ENCODE measurements at regions of chr6 and their contacts with region 1.

Region 1: GRCh38 chr6:147202516-147203312 is 1.5 kb upstream of the STXBP5 start:
- DNase-seq: peak; percentile 56 to 96 (median 80)
- ATAC-seq: peak; percentile 83
- H3K4me3 ChIP-seq: peak overlapping the region; percentile 76 to 95
- H3K4me3 Mint-ChIP-seq: peak overlapping the region; percentile 95
- H3K27ac ChIP-seq: peak overlapping the region; percentile 86 to 93
- H3K27ac Mint-ChIP-seq: peak overlapping the region; percentile 99
- H3K4me1 ChIP-seq: peaks cover 12% of the 10 kb centered on the region
- H3K4me1 Mint-ChIP-seq: peaks cover 35% of the 10 kb centered on the region
- H3K27me3 ChIP-seq: no peaks in the 10 kb centered on the region
- H3K27me3 Mint-ChIP-seq: no peaks in the 10 kb centered on the region
- CTCF ChIP-seq: no peak

Region 2: DNA sequence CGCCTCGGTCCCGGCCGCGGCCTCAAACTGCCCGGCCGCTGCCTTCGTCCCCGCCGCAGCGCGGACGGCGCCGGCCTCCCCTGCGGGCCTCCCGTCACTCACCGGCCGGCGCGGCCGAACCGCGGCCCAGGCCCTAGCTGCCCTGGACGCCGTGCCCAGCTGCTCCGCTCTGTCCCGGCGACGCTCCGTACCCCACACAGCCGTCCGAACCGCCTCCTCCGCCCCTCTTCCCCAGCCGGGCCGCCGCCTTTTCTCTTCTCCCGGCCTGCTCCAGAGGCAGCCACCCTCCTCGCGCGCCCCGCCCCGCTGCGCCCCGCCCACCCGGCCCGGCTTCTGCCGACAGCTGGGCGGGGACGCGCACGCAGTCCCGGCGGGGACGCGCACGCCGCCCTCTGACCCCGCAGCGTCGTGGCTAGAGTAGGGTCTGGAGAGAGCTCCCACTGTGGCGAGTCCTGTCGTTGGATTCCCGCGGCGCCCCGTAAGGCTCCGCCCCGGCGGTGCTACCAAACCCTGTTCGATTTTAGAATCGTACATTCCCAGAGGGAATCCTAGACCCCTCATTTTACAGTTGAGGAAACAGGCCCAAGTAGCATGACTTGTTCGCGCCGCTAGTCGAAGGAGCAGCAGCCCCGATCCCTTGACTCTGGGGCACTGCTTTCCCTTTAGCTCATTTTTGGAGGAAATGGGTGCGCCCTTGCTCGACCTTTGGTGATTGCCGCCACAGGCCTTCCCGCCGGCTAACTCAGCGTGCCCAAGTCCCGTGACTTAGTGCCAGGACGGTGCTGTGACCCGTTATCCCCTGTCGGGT is 1388.0 kb before region 1 on chr6 and contains the start of gene FBXO30:
- CTCF ChIA-PET with region 1: no interaction called
- POLR2A ChIA-PET with region 1: no interaction called
- intact Hi-C with region 1: loop called (anchors 5 to 10 kb)
- DNase-seq: peak; percentile 73 to 94 (median 84)
- ATAC-seq: peak; percentile 89
- H3K4me3 ChIP-seq: peak within 1 kb of the TSS; percentile 80 to 83
- H3K4me3 Mint-ChIP-seq: peak within 1 kb of the TSS; percentile 96
- H3K27ac ChIP-seq: peak within 1 kb of the TSS; percentile 58 to 89
- H3K27ac Mint-ChIP-seq: peak within 1 kb of the TSS; percentile 96
- H3K4me1 ChIP-seq: peaks cover 32% of the 10 kb centered on the region
- H3K4me1 Mint-ChIP-seq: peaks cover 45% of the 10 kb centered on the region
- H3K27me3 ChIP-seq: no peaks in the 10 kb centered on the region
- H3K27me3 Mint-ChIP-seq: no peaks in the 10 kb centered on the region
- CTCF ChIP-seq: peak; percentile 33
- total RNA-seq, gene FBXO30: 1.5 to 1.7 TPM

Region 3: DNA sequence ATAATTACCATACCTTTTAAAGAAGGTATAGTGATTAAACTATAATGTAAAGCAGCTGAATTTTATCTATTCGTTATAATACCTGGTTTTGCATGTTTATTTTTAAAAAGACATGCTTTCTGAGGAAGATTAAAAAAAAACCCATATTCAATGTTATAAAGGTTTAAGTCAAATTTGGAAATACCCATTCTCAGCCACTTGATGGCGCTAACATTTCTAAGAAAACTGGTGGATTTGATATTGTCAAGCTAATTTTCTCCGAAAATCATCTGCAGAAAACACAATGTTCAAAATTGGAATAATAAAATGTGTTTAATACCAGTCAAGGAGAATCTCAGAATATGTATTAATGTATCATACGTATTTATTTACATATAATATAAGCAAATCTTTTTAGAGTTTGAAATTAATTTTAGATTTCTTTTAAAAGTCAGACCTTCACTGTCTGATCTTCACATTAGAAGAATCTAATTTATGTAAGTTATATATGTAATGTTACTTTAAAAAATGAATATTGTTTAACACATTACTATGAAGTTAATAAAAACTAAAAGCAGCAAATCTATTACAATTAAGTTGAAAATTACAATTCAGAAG is 1273.6 kb before region 1 on chr6:
- CTCF ChIA-PET with region 1: no interaction called
- POLR2A ChIA-PET with region 1: no interaction called
- intact Hi-C with region 1: no loop called
- DNase-seq: peak in 3 of 9 experiments; percentile 5 to 56 (median 37)
- ATAC-seq: no peak
- H3K4me3 ChIP-seq: no peak overlapping the region
- H3K4me3 Mint-ChIP-seq: no peak overlapping the region
- H3K27ac ChIP-seq: no peak overlapping the region
- H3K27ac Mint-ChIP-seq: no peak overlapping the region
- H3K4me1 ChIP-seq: no peaks in the 10 kb centered on the region
- H3K4me1 Mint-ChIP-seq: no peaks in the 10 kb centered on the region
- H3K27me3 ChIP-seq: no peaks in the 10 kb centered on the region
- H3K27me3 Mint-ChIP-seq: no peaks in the 10 kb centered on the region
- CTCF ChIP-seq: peak; percentile 91

Region 4: DNA sequence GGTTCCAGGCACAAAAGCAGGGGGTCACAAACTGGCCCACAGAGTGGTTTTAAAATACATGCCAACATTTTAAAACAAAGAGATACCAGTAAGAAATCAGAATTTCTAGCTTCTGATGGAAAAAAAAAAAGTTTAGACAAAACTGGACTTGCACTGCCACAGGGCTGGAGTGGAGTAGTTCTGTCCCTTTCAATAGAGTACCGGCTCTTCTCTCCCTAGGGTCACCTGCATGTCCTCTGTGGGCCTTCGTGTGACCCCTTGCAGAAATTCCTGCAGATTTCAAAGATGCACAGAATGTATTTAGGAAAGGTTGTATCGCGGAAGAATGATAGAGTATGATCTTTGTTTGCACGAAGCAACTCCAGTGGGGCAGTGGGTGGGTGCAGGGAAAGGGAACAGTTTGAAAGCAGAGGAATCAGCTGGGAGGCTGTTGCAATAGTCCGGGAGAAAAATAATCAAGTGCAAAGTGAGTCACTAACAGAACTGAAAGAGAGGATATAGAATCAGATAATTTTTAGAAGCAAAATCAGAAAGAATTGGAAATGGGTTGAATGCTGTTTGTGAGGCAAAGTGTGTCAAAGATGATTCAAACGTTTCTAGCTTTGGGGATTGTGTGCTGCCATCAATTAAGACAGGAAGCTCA is 95.8 kb before region 1 on chr6:
- CTCF ChIA-PET with region 1: no interaction called
- POLR2A ChIA-PET with region 1: interaction called, 12 read pairs
- intact Hi-C with region 1: loop called in 1 of 2 experiments (anchors 2 kb)
- DNase-seq: no peak
- ATAC-seq: no peak
- H3K4me3 ChIP-seq: no peak overlapping the region
- H3K4me3 Mint-ChIP-seq: peak overlapping the region; percentile 8
- H3K27ac ChIP-seq: no peak overlapping the region
- H3K27ac Mint-ChIP-seq: no peak overlapping the region
- H3K4me1 ChIP-seq: peaks cover 47% of the 10 kb centered on the region
- H3K4me1 Mint-ChIP-seq: peaks cover 56% of the 10 kb centered on the region
- H3K27me3 ChIP-seq: no peaks in the 10 kb centered on the region
- H3K27me3 Mint-ChIP-seq: no peaks in the 10 kb centered on the region
- CTCF ChIP-seq: no peak

Region 5: GRCh38 chr6:147154454-147154853 is 48.3 kb before region 1 on chr6:
- CTCF ChIA-PET with region 1: no interaction called
- POLR2A ChIA-PET with region 1: no interaction called
- intact Hi-C with region 1: no loop called
- DNase-seq: no peak
- ATAC-seq: no peak
- H3K4me3 ChIP-seq: no peak overlapping the region
- H3K4me3 Mint-ChIP-seq: no peak overlapping the region
- H3K27ac ChIP-seq: no peak overlapping the region
- H3K27ac Mint-ChIP-seq: no peak overlapping the region
- H3K4me1 ChIP-seq: no peaks in the 10 kb centered on the region
- H3K4me1 Mint-ChIP-seq: no peaks in the 10 kb centered on the region
- H3K27me3 ChIP-seq: no peaks in the 10 kb centered on the region
- H3K27me3 Mint-ChIP-seq: peaks cover 2% of the 10 kb centered on the region
- CTCF ChIP-seq: no peak

Region 6: GRCh38 chr6:147180926-147181325 is 21.8 kb before region 1 on chr6:
- CTCF ChIA-PET with region 1: no interaction called
- POLR2A ChIA-PET with region 1: no interaction called
- intact Hi-C with region 1: no loop called
- DNase-seq: no peak
- ATAC-seq: no peak
- H3K4me3 ChIP-seq: no peak overlapping the region
- H3K4me3 Mint-ChIP-seq: no peak overlapping the region
- H3K27ac ChIP-seq: no peak overlapping the region
- H3K27ac Mint-ChIP-seq: no peak overlapping the region
- H3K4me1 ChIP-seq: no peaks in the 10 kb centered on the region
- H3K4me1 Mint-ChIP-seq: no peaks in the 10 kb centered on the region
- H3K27me3 ChIP-seq: peaks cover 0 to under 1% of the 10 kb centered on the region in 2 experiments
- H3K27me3 Mint-ChIP-seq: peaks cover 5% of the 10 kb centered on the region
- CTCF ChIP-seq: no peak

Region 7: GRCh38 chr6:147285087-147285855 is 82.6 kb after region 1 on chr6:
- CTCF ChIA-PET with region 1: no interaction called
- POLR2A ChIA-PET with region 1: no interaction called
- intact Hi-C with region 1: loop called in 1 of 2 experiments (anchors 5 kb)
- DNase-seq: peak in 2 of 9 experiments; percentile 38 to 57
- ATAC-seq: no peak
- H3K4me3 ChIP-seq: no peak overlapping the region
- H3K4me3 Mint-ChIP-seq: no peak overlapping the region
- H3K27ac ChIP-seq: no peak overlapping the region
- H3K27ac Mint-ChIP-seq: peak overlapping the region; percentile 60
- H3K4me1 ChIP-seq: no peaks in the 10 kb centered on the region
- H3K4me1 Mint-ChIP-seq: peaks cover 23% of the 10 kb centered on the region
- H3K27me3 ChIP-seq: no peaks in the 10 kb centered on the region
- H3K27me3 Mint-ChIP-seq: no peaks in the 10 kb centered on the region
- CTCF ChIP-seq: peak; percentile 59

Measured in CD8-positive, alpha-beta T cell (primary cell).